Panc1 (cell line): ENCODE measurements at regions of chr2 and their contacts with region 1.

Region 1: GRCh38 chr2:106990297-106990696 is 104.3 kb upstream of the ST6GAL2 start:
- DNase-seq: no peak
- ATAC-seq: no peak
- H3K4me3 ChIP-seq: no peak overlapping the region
- H3K27ac ChIP-seq: no peak overlapping the region
- H3K4me1 ChIP-seq: no peaks in the 10 kb centered on the region
- H3K27me3 ChIP-seq: no peaks in the 10 kb centered on the region
- CTCF ChIP-seq: no peak

Region 2: DNA sequence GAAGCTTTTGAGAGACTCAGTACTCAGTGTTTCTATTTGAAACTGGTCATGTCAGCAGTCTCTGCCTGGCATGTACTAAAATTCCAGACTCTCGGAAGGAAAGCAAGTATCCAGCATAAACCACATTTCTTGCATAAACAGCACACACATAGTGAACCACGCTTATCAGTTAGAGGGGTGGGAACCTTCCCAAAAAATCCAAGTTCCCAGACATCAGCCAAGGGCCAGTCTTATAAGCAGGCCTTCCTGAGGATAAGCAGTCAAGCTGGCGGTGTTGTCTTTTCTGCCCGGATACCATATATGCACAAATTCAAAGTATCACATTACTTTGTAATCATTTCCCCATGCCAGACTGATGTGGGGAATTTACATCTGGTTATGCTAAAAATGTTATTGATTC is 177.9 kb before region 1 on chr2:
- CTCF ChIA-PET with region 1: no interaction called
- POLR2A ChIA-PET with region 1: interaction called, 10 read pairs
- in situ Hi-C with region 1: no loop called
- intact Hi-C with region 1: no loop called
- DNase-seq: no peak
- ATAC-seq: no peak
- H3K4me3 ChIP-seq: no peak overlapping the region
- H3K27ac ChIP-seq: no peak overlapping the region
- H3K4me1 ChIP-seq: no peaks in the 10 kb centered on the region
- H3K27me3 ChIP-seq: no peaks in the 10 kb centered on the region
- CTCF ChIP-seq: no peak

Region 3: DNA sequence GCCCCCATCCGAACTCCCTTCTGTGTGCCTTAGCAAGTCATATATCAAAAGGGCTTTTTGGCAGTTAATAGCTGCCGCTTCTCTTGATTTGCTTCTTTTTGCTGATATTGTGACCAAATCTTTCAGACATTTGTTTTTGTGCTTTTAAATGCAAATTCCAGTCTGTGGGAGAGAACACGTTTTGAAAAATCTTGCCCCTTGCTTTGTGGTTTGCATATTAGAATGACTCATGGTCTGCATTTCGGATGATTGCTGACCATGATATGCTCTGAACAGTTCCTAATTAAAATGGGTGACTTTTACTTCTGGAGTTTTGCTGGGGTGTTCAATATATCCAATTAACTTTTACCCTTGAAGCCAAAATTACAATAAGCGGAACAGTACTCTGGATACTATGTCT is 46.1 kb before region 1 on chr2:
- CTCF ChIA-PET with region 1: no interaction called
- POLR2A ChIA-PET with region 1: no interaction called
- in situ Hi-C with region 1: no loop called
- intact Hi-C with region 1: no loop called
- DNase-seq: no peak
- ATAC-seq: no peak
- H3K4me3 ChIP-seq: no peak overlapping the region
- H3K27ac ChIP-seq: no peak overlapping the region
- H3K4me1 ChIP-seq: no peaks in the 10 kb centered on the region
- H3K27me3 ChIP-seq: no peaks in the 10 kb centered on the region
- CTCF ChIP-seq: no peak